Caco-2 (cell line): ENCODE measurements at regions of chr1 and their contacts with region 1.

Region 1: GRCh38 chr1:159780583-159781582 is at the start of gene DUSP23:
- DNase-seq: peak; percentile 97 to 99
- H3K4me3 ChIP-seq: peak within 1 kb of the TSS; percentile 63
- H3K4me3 Mint-ChIP-seq: peak within 1 kb of the TSS; percentile 90
- H3K27ac Mint-ChIP-seq: peak within 1 kb of the TSS; percentile 89
- H3K4me1 ChIP-seq: peaks cover 15% of the 10 kb centered on the region
- H3K4me1 Mint-ChIP-seq: peaks cover 16% of the 10 kb centered on the region
- H3K27me3 ChIP-seq: no peaks in the 10 kb centered on the region
- H3K27me3 Mint-ChIP-seq: no peaks in the 10 kb centered on the region
- CTCF ChIP-seq: peak; percentile 94 to 97
- total RNA-seq, gene DUSP23: 40.5 and 44.5 TPM in 2 replicates

Region 2: GRCh38 chr1:159177273-159177907 is 603.5 kb before region 1 on chr1:
- CTCF ChIA-PET with region 1: no interaction called
- POLR2A ChIA-PET with region 1: no interaction called
- intact Hi-C with region 1: loop called (anchors 5 kb)
- DNase-seq: peak; percentile 67 to 78
- H3K4me3 ChIP-seq: no peak overlapping the region
- H3K4me3 Mint-ChIP-seq: no peak overlapping the region
- H3K27ac Mint-ChIP-seq: no peak overlapping the region
- H3K4me1 ChIP-seq: no peaks in the 10 kb centered on the region
- H3K4me1 Mint-ChIP-seq: no peaks in the 10 kb centered on the region
- H3K27me3 ChIP-seq: no peaks in the 10 kb centered on the region
- H3K27me3 Mint-ChIP-seq: peaks cover 15% of the 10 kb centered on the region
- CTCF ChIP-seq: no peak

Region 3: DNA sequence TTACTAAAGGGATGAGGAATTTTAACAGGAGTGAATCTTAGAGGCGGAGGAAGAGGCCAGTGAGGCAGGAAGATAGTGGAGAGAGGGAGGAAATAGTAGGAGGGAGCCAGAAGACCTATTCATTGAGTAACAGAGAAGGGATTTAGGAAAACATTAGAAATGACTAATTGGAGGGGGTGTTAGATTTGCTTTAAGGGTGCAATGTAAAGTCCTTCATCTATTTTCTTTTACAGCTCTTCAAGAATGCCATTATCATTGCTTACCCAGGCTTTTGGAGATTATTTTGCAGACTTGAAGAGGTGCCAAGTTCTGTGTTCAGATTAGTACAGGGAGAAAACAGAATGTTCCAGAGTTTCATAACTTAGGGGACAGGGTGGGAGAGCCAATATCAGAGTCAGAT is 307.5 kb before region 1 on chr1:
- CTCF ChIA-PET with region 1: no interaction called
- POLR2A ChIA-PET with region 1: no interaction called
- intact Hi-C with region 1: no loop called
- DNase-seq: no peak
- H3K4me3 ChIP-seq: no peak overlapping the region
- H3K4me3 Mint-ChIP-seq: no peak overlapping the region
- H3K27ac Mint-ChIP-seq: no peak overlapping the region
- H3K4me1 ChIP-seq: no peaks in the 10 kb centered on the region
- H3K4me1 Mint-ChIP-seq: no peaks in the 10 kb centered on the region
- H3K27me3 ChIP-seq: no peaks in the 10 kb centered on the region
- H3K27me3 Mint-ChIP-seq: peaks cover 8% of the 10 kb centered on the region
- CTCF ChIP-seq: no peak

Region 4: DNA sequence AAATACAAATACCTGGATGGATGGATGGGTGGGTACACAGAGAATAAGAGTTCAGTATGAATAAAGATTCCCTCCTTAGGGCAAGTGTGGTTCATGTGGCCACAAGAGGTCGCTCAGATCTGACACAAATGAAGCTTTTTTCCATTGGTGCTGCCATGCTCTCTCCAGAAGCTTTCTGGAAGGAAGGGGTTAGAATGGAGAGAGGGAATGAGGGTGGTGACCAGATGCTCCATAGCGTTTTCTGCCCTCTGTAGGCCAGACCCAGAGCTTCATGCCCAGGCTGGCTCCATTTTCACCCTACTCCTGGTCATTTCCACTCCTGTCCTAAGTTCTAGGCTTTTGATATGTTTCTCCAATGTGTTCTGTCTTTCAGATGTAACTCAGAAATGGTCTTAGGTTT is 18.0 kb after region 1 on chr1:
- CTCF ChIA-PET with region 1: interaction called, 33 read pairs
- POLR2A ChIA-PET with region 1: no interaction called
- intact Hi-C with region 1: loop called (anchors 1 kb)
- DNase-seq: peak; percentile 78 to 79
- H3K4me3 ChIP-seq: no peak overlapping the region
- H3K4me3 Mint-ChIP-seq: no peak overlapping the region
- H3K27ac Mint-ChIP-seq: no peak overlapping the region
- H3K4me1 ChIP-seq: no peaks in the 10 kb centered on the region
- H3K4me1 Mint-ChIP-seq: no peaks in the 10 kb centered on the region
- H3K27me3 ChIP-seq: no peaks in the 10 kb centered on the region
- H3K27me3 Mint-ChIP-seq: peaks cover 14% of the 10 kb centered on the region
- CTCF ChIP-seq: peak; percentile 69 to 84

Region 5: GRCh38 chr1:159891275-159892157 is 110.6 kb after region 1 on chr1:
- CTCF ChIA-PET with region 1: interaction called, 10 read pairs
- POLR2A ChIA-PET with region 1: no interaction called
- intact Hi-C with region 1: loop called (anchors 1 kb)
- DNase-seq: peak; percentile 74 to 81
- H3K4me3 ChIP-seq: no peak overlapping the region
- H3K4me3 Mint-ChIP-seq: no peak overlapping the region
- H3K27ac Mint-ChIP-seq: no peak overlapping the region
- H3K4me1 ChIP-seq: peaks cover 16% of the 10 kb centered on the region
- H3K4me1 Mint-ChIP-seq: peaks cover 13% of the 10 kb centered on the region
- H3K27me3 ChIP-seq: no peaks in the 10 kb centered on the region
- H3K27me3 Mint-ChIP-seq: no peaks in the 10 kb centered on the region
- CTCF ChIP-seq: peak; percentile 86 to 97

Region 6: DNA sequence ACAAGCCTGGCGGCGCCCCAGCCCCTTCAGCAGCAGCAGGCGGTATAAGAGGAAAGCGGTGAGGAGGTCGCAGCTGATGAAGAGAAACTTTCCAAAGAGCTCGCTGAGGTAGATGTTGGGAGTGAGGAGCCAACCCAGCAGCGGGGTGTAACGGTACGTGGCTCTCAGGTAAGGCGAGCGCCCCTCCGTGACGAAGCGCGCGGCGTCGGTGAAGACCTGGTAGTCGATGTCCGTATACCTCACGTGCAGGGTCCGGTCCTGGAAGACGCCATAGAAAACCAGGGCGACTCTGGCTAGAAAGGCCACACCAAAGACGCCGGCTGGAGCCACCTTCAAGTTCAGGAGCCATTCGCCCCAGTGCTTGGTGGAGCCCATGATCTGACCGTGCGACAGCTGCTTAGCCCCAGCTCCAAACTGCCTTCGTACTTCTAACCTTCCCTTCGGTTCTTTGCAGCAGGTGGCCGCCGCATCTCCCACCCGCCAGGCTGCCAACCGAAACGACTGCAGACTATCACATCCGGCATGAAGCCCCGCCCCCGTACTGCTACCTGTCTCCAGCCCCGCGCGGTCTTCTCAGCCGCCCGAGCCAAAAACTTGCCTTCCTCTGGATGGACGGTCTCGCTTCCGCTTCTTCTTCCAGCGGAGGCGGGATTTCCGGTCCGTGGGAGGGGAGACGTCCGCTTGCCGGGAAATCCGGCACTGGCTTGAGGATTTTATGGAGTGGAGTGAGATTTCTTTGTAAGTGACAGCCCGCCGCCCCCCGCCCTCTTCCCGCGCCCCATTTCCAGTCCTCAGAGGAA is 250.7 kb after region 1 on chr1 and contains the start of gene PIGM:
- CTCF ChIA-PET with region 1: no interaction called
- POLR2A ChIA-PET with region 1: interaction called, 3 read pairs
- intact Hi-C with region 1: loop called (anchors 1 kb)
- DNase-seq: peak; percentile 95 to 96
- H3K4me3 ChIP-seq: peak within 1 kb of the TSS; percentile 96
- H3K4me3 Mint-ChIP-seq: peak within 1 kb of the TSS; percentile 80
- H3K27ac Mint-ChIP-seq: peak within 1 kb of the TSS; percentile 71
- H3K4me1 ChIP-seq: peaks cover 6% of the 10 kb centered on the region
- H3K4me1 Mint-ChIP-seq: peaks cover 15% of the 10 kb centered on the region
- H3K27me3 ChIP-seq: no peaks in the 10 kb centered on the region
- H3K27me3 Mint-ChIP-seq: peaks cover 4% of the 10 kb centered on the region
- CTCF ChIP-seq: no peak
- total RNA-seq, gene PIGM: 5.5 and 5.7 TPM in 2 replicates